ENCODE measurements at regions of chrX and their contacts with region 1.

Region 1: GRCh38 chrX:113935518-113935917 is 648.4 kb upstream of the HTR2C start:
- DNase-seq: peak in 1 of 2 experiments; percentile 80
- H3K4me3 ChIP-seq: peak overlapping the region; percentile 10; the same call in 1 of the 2 replicates
- H3K27ac ChIP-seq: peak overlapping the region; percentile 50
- H3K4me1 ChIP-seq: peaks cover 19% of the 10 kb centered on the region
- H3K27me3 ChIP-seq: no peaks in the 10 kb centered on the region
- CTCF ChIP-seq: no peak

Region 2: DNA sequence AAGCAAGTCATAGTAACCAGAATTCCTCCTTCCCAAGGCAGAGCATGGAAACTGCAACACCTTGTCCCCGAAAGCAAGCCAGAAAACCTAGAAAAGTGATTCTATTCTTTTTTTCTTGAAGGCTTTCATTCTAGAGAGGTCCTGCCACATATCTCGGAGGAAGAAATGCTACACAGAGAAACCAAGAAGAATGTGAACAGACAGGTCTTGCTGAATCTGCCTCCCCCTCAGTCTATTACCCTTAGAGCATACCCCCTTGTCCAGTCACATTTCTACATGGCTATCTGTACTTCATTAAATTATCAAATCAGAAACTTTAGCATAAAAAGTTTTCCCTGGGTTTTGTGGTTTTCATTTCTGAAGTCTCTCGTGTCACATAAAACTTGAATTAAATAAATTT is 143.7 kb before region 1 on chrX:
- CTCF ChIA-PET with region 1: no interaction called
- POLR2A ChIA-PET with region 1: no interaction called
- intact Hi-C with region 1: no loop called
- DNase-seq: no peak
- H3K4me3 ChIP-seq: no peak overlapping the region
- H3K27ac ChIP-seq: no peak overlapping the region
- H3K4me1 ChIP-seq: no peaks in the 10 kb centered on the region
- H3K27me3 ChIP-seq: no peaks in the 10 kb centered on the region
- CTCF ChIP-seq: no peak

Region 3: DNA sequence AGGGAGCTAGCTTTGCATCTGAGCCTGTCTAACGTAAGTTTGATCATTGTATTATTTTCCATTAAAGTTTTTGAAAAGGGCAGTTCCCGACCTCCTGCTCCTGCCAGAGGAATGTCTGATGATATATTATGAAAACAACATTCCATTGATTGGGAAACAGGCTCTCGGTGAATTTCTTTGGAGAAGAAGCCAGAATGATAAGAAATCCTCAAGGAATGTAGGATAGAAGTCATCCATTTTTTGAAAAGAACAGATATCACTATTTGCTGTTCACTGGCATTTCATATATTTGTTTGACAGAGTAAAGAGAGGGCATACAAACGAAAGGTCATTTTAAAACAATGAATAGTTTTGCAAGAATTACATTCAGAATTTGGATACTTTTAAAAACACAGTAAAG is 132.7 kb before region 1 on chrX:
- CTCF ChIA-PET with region 1: no interaction called
- POLR2A ChIA-PET with region 1: no interaction called
- intact Hi-C with region 1: no loop called
- DNase-seq: no peak
- H3K4me3 ChIP-seq: no peak overlapping the region
- H3K27ac ChIP-seq: no peak overlapping the region
- H3K4me1 ChIP-seq: peaks cover 10% of the 10 kb centered on the region
- H3K27me3 ChIP-seq: no peaks in the 10 kb centered on the region
- CTCF ChIP-seq: no peak

Region 4: GRCh38 chrX:113986427-113986826 is 50.9 kb after region 1 on chrX:
- CTCF ChIA-PET with region 1: no interaction called
- POLR2A ChIA-PET with region 1: no interaction called
- intact Hi-C with region 1: loop called (anchors 2 kb)
- DNase-seq: no peak
- H3K4me3 ChIP-seq: no peak overlapping the region
- H3K27ac ChIP-seq: no peak overlapping the region
- H3K4me1 ChIP-seq: no peaks in the 10 kb centered on the region
- H3K27me3 ChIP-seq: no peaks in the 10 kb centered on the region
- CTCF ChIP-seq: no peak